IMR-90 (cell line): ENCODE measurements at regions of chrX and their contacts with region 1.

Region 1: GRCh38 chrX:57821703-57822375 is 88.4 kb downstream of the ZXDA start:
- DNase-seq: peak; percentile 55
- ATAC-seq: peak; percentile 69
- H3K4me3 ChIP-seq: no peak overlapping the region
- H3K27ac ChIP-seq: no peak overlapping the region
- H3K4me1 ChIP-seq: no peaks in the 10 kb centered on the region
- H3K27me3 ChIP-seq: no peaks in the 10 kb centered on the region
- CTCF ChIP-seq: peak; percentile 71
- POLR2A ChIP-seq: no peak
- RAD21 ChIP-seq: peak; percentile 85

Region 2: GRCh38 chrX:57083143-57083542 is 738.7 kb before region 1 on chrX:
- CTCF ChIA-PET with region 1: no interaction called
- POLR2A ChIA-PET with region 1: no interaction called
- dilution Hi-C with region 1: no loop called
- in situ Hi-C with region 1: no loop called
- intact Hi-C with region 1: no loop called
- DNase-seq: no peak
- ATAC-seq: no peak
- H3K4me3 ChIP-seq: no peak overlapping the region
- H3K27ac ChIP-seq: no peak overlapping the region
- H3K4me1 ChIP-seq: no peaks in the 10 kb centered on the region
- H3K27me3 ChIP-seq: no peaks in the 10 kb centered on the region
- CTCF ChIP-seq: no peak
- POLR2A ChIP-seq: no peak
- RAD21 ChIP-seq: no peak

Region 3: GRCh38 chrX:57573754-57574153 is 248.1 kb before region 1 on chrX:
- CTCF ChIA-PET with region 1: no interaction called
- POLR2A ChIA-PET with region 1: no interaction called
- dilution Hi-C with region 1: no loop called
- in situ Hi-C with region 1: no loop called
- intact Hi-C with region 1: loop called (anchors 1 kb)
- DNase-seq: peak; percentile 17
- ATAC-seq: peak; percentile 56; the same call in 1 of the 2 replicates
- H3K4me3 ChIP-seq: no peak overlapping the region
- H3K27ac ChIP-seq: no peak overlapping the region
- H3K4me1 ChIP-seq: no peaks in the 10 kb centered on the region
- H3K27me3 ChIP-seq: no peaks in the 10 kb centered on the region; the same call in 1 of the 2 replicates
- CTCF ChIP-seq: peak; percentile 54
- POLR2A ChIP-seq: no peak
- RAD21 ChIP-seq: peak; percentile 56

Region 4: DNA sequence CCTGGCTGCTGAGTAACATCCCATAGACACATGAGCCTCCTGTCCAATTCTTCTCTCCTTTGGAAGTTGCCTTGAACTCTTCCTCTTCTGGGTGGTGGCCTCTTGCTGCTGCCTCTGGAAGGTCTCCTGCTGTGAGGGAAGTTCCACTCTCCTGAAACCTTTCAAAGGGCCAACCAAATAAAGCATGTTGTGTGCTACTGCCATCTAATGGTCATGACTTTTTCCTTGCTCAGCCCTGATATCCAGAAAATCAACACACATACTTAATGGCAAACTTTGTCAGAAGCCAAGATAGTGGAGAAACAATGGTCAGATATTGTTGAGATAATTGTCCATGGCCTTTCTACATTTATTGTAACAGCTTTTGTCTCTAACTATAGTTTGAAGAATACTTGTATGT is 107.5 kb after region 1 on chrX:
- CTCF ChIA-PET with region 1: interaction called, 5 read pairs
- POLR2A ChIA-PET with region 1: no interaction called
- dilution Hi-C with region 1: no loop called
- in situ Hi-C with region 1: no loop called
- intact Hi-C with region 1: loop called (anchors 1 kb)
- DNase-seq: peak; percentile 27
- ATAC-seq: peak; percentile 67; the same call in 1 of the 2 replicates
- H3K4me3 ChIP-seq: no peak overlapping the region
- H3K27ac ChIP-seq: no peak overlapping the region
- H3K4me1 ChIP-seq: no peaks in the 10 kb centered on the region
- H3K27me3 ChIP-seq: no peaks in the 10 kb centered on the region
- CTCF ChIP-seq: peak; percentile 50
- POLR2A ChIP-seq: no peak
- RAD21 ChIP-seq: peak; percentile 44

Region 5: GRCh38 chrX:58025979-58026378 is 204.1 kb after region 1 on chrX:
- CTCF ChIA-PET with region 1: no interaction called
- POLR2A ChIA-PET with region 1: no interaction called
- dilution Hi-C with region 1: no loop called
- in situ Hi-C with region 1: no loop called
- intact Hi-C with region 1: loop called (anchors 1 kb)
- DNase-seq: peak; percentile 25
- ATAC-seq: peak; percentile 42; the same call in 1 of the 2 replicates
- H3K4me3 ChIP-seq: no peak overlapping the region
- H3K27ac ChIP-seq: no peak overlapping the region
- H3K4me1 ChIP-seq: no peaks in the 10 kb centered on the region
- H3K27me3 ChIP-seq: no peaks in the 10 kb centered on the region
- CTCF ChIP-seq: peak; percentile 44
- POLR2A ChIP-seq: no peak
- RAD21 ChIP-seq: peak; percentile 33; the same call in 1 of the 2 replicates